ENCODE measurements at regions of chr19 and their contacts with region 1.

Region 1: DNA sequence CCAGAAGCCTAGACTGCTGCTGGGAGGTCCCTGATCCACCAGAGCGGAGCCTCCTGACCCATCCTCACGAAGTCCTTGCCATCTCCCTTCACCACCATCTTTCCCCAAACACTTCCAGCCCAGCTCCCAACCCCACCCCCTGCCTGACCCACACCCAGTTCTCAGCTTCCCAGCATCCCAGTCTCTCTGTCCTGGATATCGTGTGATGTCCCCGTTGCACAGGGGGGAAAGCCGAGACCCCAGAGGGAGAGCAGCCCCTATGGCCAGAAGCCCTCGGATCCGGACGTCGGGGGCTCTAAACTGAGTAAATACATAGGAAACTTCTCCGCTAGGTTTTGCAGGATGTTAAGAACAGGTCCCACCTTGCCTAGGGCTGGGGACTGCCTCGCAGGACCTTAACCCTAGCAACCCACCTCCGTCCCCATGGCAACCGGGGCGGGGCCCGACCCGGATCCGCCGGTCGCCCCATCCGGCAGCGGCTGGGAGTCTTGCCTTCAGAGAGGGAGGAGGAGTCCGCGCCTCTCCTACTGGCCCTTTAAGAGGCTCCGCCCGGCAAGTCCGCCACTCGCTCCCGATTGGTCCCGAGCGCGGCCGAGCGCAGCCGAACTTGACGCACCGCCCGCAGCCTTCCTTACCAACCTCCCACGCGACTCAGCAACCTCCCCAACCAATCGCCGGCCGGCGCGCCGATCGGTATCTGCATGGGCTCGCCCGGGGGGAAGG is 451 bp upstream of the HMG20B start:
- DNase-seq: peak; percentile 97
- ATAC-seq: peak; percentile 97
- H3K4me3 ChIP-seq: peak overlapping the region; percentile 85
- H3K27ac ChIP-seq: no peak overlapping the region
- H3K4me1 ChIP-seq: peaks cover 3% of the 10 kb centered on the region
- H3K27me3 ChIP-seq: no peaks in the 10 kb centered on the region
- CTCF ChIP-seq: no peak
- EP300 ChIP-seq: no peak
- POLR2A ChIP-seq: no peak
- RAD21 ChIP-seq: no peak

Region 2: DNA sequence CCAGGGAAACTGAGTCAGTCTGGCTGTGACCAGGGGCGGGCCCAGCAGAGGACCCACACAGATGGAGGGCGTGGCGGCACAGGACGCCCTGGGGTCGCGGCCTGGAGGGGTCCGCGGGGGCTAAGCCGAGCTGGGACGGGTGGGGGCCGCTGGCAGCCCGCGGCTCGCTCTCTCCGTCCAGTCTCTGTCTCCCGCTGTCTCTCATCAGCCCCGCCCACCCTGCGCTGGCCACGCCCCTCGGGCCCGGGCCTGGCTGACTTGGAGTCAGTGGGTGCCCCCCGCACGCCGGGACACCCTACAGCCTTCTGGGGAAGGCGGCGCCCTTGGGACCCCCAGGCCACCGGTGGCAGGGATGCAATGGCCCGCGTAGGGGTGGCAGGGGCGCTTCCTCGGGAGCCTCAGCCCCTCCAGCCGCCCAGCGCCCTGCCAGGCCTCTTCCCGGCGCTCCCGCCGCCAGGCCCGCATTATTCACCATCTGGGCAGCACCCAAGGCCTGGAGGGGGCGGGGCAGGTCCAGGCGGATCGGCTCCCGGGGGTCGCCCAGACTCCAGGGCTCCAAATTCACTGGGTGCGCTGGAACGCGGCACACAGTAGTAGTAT is 34.5 kb after region 1 on chr19 and contains the start of gene TBXA2R:
- CTCF ChIA-PET with region 1: no interaction called
- POLR2A ChIA-PET with region 1: no interaction called
- RAD21 ChIA-PET with region 1: no interaction called
- SMC1A ChIA-PET with region 1: no interaction called
- in situ Hi-C with region 1: no loop called
- intact Hi-C with region 1: loop called (anchors 5 kb)
- DNase-seq: no peak
- ATAC-seq: peak; percentile 70
- H3K4me3 ChIP-seq: no peak within 1 kb of the TSS
- H3K27ac ChIP-seq: no peak within 1 kb of the TSS
- H3K4me1 ChIP-seq: peaks cover 12% of the 10 kb centered on the region
- H3K27me3 ChIP-seq: no peaks in the 10 kb centered on the region
- CTCF ChIP-seq: no peak
- EP300 ChIP-seq: no peak
- POLR2A ChIP-seq: no peak
- RAD21 ChIP-seq: no peak
- polyA plus RNA-seq, gene TBXA2R: not detected